ENCODE measurements at regions of chr12 and their contacts with region 1.

Region 1: GRCh38 chr12:114245555-114245954 is 160.4 kb downstream of the TBX5 start:
- DNase-seq: no peak
- ATAC-seq: peak; percentile 40

Region 2: GRCh38 chr12:114063435-114063834 is 182.1 kb before region 1 on chr12:
- intact Hi-C with region 1: no loop called
- DNase-seq: no peak
- ATAC-seq: no peak

Region 3: GRCh38 chr12:114355389-114356088 is 110.0 kb after region 1 on chr12:
- intact Hi-C with region 1: loop called (anchors 10 kb)
- DNase-seq: peak; percentile 69
- ATAC-seq: peak; percentile 70